ENCODE measurements at regions of chr5 and their contacts with region 1.

Region 1: GRCh38 chr5:147830035-147830434 is 1.4 kb downstream of the SPINK1 start:
- DNase-seq: no peak
- ATAC-seq: no peak
- H3K4me3 Mint-ChIP-seq: no peak overlapping the region
- H3K27ac Mint-ChIP-seq: no peak overlapping the region
- H3K4me1 Mint-ChIP-seq: no peaks in the 10 kb centered on the region
- H3K27me3 Mint-ChIP-seq: peaks cover 10% of the 10 kb centered on the region

Region 2: GRCh38 chr5:147628058-147628895 is 201.8 kb before region 1 on chr5:
- CTCF ChIA-PET with region 1: interaction called, 108 read pairs
- POLR2A ChIA-PET with region 1: no interaction called
- intact Hi-C with region 1: no loop called
- DNase-seq: peak; percentile 66
- ATAC-seq: peak; percentile 63
- H3K4me3 Mint-ChIP-seq: no peak overlapping the region
- H3K27ac Mint-ChIP-seq: no peak overlapping the region
- H3K4me1 Mint-ChIP-seq: no peaks in the 10 kb centered on the region
- H3K27me3 Mint-ChIP-seq: no peaks in the 10 kb centered on the region

Region 3: GRCh38 chr5:147727200-147727599 is 102.8 kb before region 1 on chr5:
- CTCF ChIA-PET with region 1: no interaction called
- POLR2A ChIA-PET with region 1: no interaction called
- intact Hi-C with region 1: no loop called
- DNase-seq: no peak
- ATAC-seq: no peak
- H3K4me3 Mint-ChIP-seq: no peak overlapping the region
- H3K27ac Mint-ChIP-seq: no peak overlapping the region
- H3K4me1 Mint-ChIP-seq: no peaks in the 10 kb centered on the region
- H3K27me3 Mint-ChIP-seq: peaks cover 1% of the 10 kb centered on the region

Region 4: DNA sequence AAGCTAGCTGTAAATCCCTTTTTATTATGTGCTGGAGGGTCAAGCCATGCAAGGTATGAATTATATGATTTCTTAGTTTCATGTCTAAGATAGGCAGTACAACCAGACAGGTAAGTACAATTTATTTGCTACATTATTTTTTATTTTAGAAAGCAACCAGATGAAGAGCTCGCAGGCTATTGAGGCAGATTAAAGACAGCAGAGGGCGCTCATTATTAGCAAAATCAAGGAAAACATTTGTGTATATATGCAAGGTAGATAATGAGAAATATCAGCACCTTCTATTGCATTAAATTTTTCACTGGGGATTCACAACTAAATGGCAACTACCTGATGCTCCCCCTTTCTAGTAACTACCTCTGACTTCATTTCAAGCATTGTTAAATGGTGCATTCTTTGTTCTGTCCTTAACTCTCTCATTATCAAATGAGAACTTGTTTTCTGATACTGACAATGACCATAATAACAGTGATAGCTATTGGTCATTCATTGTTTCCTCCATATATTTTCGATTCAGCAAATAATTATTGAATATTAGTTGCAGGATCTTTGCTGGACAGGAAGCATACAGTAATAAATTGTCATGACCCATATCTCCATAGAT is 57.1 kb after region 1 on chr5:
- CTCF ChIA-PET with region 1: no interaction called
- POLR2A ChIA-PET with region 1: no interaction called
- intact Hi-C with region 1: no loop called
- DNase-seq: no peak
- ATAC-seq: no peak
- H3K4me3 Mint-ChIP-seq: no peak overlapping the region
- H3K27ac Mint-ChIP-seq: no peak overlapping the region
- H3K4me1 Mint-ChIP-seq: no peaks in the 10 kb centered on the region
- H3K27me3 Mint-ChIP-seq: peaks cover 5% of the 10 kb centered on the region